ENCODE measurements at regions of chr1 and their contacts with region 1.

Region 1: DNA sequence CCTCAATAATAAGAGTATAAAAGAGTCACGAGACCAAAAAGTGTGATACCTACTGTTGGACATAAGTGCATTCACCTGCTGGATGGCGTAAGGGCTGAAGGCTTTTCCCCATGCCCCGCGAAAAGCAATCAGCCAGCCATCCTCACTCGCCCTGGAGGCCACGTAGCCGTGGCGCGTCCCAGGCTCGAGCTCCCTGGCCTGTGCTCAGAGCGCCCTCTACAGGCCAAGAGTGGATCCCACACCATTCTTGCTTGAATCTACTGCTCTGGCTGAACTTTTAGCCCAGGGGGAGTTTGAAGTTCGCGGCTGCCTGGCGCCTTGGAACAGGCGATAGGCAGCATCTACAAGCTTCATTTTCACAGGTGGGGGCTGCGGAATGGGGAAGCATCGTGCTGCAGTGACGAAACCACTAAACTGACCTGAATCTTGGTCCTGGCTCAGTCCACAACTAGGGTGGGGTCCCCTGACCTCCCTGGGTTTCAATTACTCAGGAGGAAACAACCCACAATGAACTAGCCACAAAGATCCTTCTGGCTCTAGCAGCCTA is 70.3 kb upstream of the SERBP1 start:
- DNase-seq: peak; percentile 57
- ATAC-seq: peak; percentile 99
- H3K4me3 ChIP-seq: no peak overlapping the region
- H3K27ac ChIP-seq: no peak overlapping the region
- H3K4me1 ChIP-seq: no peaks in the 10 kb centered on the region
- H3K27me3 ChIP-seq: no peaks in the 10 kb centered on the region; the same call in 1 of the 2 replicates
- CTCF ChIP-seq: peak; percentile 98

Region 2: GRCh38 chr1:66996018-66996682 is 504.3 kb before region 1 on chr1:
- CTCF ChIA-PET with region 1: no interaction called
- POLR2A ChIA-PET with region 1: no interaction called
- in situ Hi-C with region 1: no loop called
- intact Hi-C with region 1: loop called (anchors 10 kb)
- DNase-seq: peak; percentile 71
- ATAC-seq: peak; percentile 87
- H3K4me3 ChIP-seq: no peak overlapping the region
- H3K27ac ChIP-seq: no peak overlapping the region
- H3K4me1 ChIP-seq: no peaks in the 10 kb centered on the region
- H3K27me3 ChIP-seq: no peaks in the 10 kb centered on the region
- CTCF ChIP-seq: peak; percentile 88

Region 3: GRCh38 chr1:67214420-67215174 is 285.9 kb before region 1 on chr1:
- CTCF ChIA-PET with region 1: interaction called, 12 read pairs
- POLR2A ChIA-PET with region 1: no interaction called
- in situ Hi-C with region 1: no loop called
- intact Hi-C with region 1: loop called (anchors 5 kb)
- DNase-seq: no peak
- ATAC-seq: peak; percentile 68; the same call in 1 of the 2 replicates
- H3K4me3 ChIP-seq: no peak overlapping the region
- H3K27ac ChIP-seq: no peak overlapping the region
- H3K4me1 ChIP-seq: no peaks in the 10 kb centered on the region
- H3K27me3 ChIP-seq: peaks cover 6% of the 10 kb centered on the region; the same call in 1 of the 2 replicates
- CTCF ChIP-seq: peak; percentile 59

Region 4: DNA sequence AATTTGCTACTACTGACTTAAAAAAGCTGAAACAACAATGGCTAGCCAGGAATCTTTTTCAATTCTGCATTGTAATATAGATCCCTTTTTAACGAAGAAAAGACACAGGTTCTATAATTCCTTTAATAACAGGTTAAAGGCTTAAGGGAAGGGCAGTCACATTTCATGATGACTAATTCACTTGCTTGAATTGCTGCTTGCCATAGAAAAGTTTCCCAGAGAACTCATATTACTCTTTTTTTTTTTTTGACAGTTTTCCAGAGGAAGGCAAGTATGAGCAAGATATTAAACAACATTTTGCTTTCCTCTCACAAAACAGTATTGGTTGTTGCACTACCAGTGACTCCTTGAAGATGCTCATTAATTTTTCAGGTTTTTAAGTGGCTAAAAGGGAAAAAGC is 273.3 kb before region 1 on chr1:
- CTCF ChIA-PET with region 1: no interaction called
- POLR2A ChIA-PET with region 1: no interaction called
- in situ Hi-C with region 1: no loop called
- intact Hi-C with region 1: loop called (anchors 5 kb)
- DNase-seq: no peak
- ATAC-seq: no peak
- H3K4me3 ChIP-seq: no peak overlapping the region
- H3K27ac ChIP-seq: no peak overlapping the region
- H3K4me1 ChIP-seq: no peaks in the 10 kb centered on the region
- H3K27me3 ChIP-seq: peaks cover 4% of the 10 kb centered on the region; the same call in 1 of the 2 replicates
- CTCF ChIP-seq: no peak

Region 5: GRCh38 chr1:67347688-67348472 is 152.6 kb before region 1 on chr1:
- CTCF ChIA-PET with region 1: interaction called, 10 read pairs
- POLR2A ChIA-PET with region 1: no interaction called
- in situ Hi-C with region 1: no loop called
- intact Hi-C with region 1: loop called (anchors 2 kb)
- DNase-seq: peak; percentile 33
- ATAC-seq: peak; percentile 92
- H3K4me3 ChIP-seq: no peak overlapping the region
- H3K27ac ChIP-seq: no peak overlapping the region
- H3K4me1 ChIP-seq: no peaks in the 10 kb centered on the region
- H3K27me3 ChIP-seq: peaks cover 2% of the 10 kb centered on the region; the same call in 1 of the 2 replicates
- CTCF ChIP-seq: peak; percentile 83

Region 6: DNA sequence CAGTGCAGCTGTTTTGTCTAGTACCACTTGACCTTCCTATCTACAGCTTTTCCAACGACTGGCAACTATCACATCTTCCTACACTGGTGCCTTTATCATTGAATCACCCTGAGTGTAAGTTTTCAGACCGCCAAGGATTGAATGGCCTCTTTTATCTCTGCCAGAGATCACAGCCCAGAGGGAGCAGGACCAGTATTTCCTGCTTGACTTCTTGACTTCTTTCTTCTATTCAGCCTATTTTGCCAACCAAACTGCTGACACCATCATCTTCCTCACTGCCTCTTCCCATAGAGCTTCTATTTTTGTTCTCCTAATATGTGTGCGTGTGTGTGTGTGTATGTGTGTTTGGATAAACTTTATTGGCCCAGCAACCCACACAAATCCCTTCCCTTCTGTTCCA is 124.1 kb before region 1 on chr1:
- CTCF ChIA-PET with region 1: no interaction called
- POLR2A ChIA-PET with region 1: no interaction called
- in situ Hi-C with region 1: no loop called
- intact Hi-C with region 1: no loop called
- DNase-seq: no peak
- ATAC-seq: no peak
- H3K4me3 ChIP-seq: no peak overlapping the region
- H3K27ac ChIP-seq: no peak overlapping the region
- H3K4me1 ChIP-seq: no peaks in the 10 kb centered on the region
- H3K27me3 ChIP-seq: no peaks in the 10 kb centered on the region
- CTCF ChIP-seq: no peak

Region 7: GRCh38 chr1:67430352-67431155 is 69.9 kb before region 1 on chr1 and contains the start of gene SERBP1:
- CTCF ChIA-PET with region 1: interaction called, 3 read pairs
- POLR2A ChIA-PET with region 1: no interaction called
- in situ Hi-C with region 1: no loop called
- intact Hi-C with region 1: loop called (anchors 5 kb)
- DNase-seq: peak; percentile 94
- ATAC-seq: peak; percentile 96
- H3K4me3 ChIP-seq: peak within 1 kb of the TSS; percentile 73 to 87
- H3K27ac ChIP-seq: peak within 1 kb of the TSS; percentile 94
- H3K4me1 ChIP-seq: peaks cover 24% of the 10 kb centered on the region
- H3K27me3 ChIP-seq: no peaks in the 10 kb centered on the region
- CTCF ChIP-seq: no peak
- total RNA-seq, gene SERBP1: 230 TPM

Region 8: DNA sequence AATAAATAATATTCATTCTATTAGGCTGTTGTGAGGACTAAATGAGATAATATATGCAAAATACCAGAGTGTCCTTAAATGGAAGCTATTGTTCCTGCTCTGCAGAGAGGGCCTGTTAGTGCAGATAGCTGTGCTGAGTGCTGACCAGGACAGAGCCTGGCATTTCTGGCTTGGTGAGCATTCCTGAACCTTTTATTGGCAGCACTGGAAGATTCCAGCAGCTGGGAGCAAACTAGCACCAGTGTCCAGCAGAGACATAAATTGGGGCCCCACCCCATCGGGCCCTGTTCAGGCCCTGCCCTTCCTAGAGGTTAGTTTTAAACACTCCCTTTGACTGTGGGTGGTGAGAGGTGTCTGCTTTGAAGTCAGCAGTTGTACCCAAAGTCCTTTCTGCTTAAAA is 98.6 kb after region 1 on chr1:
- CTCF ChIA-PET with region 1: no interaction called
- POLR2A ChIA-PET with region 1: no interaction called
- in situ Hi-C with region 1: no loop called
- intact Hi-C with region 1: no loop called
- DNase-seq: no peak
- ATAC-seq: peak; percentile 48; the same call in 1 of the 2 replicates
- H3K4me3 ChIP-seq: no peak overlapping the region
- H3K27ac ChIP-seq: peak overlapping the region; percentile 66; the same call in 1 of the 2 replicates
- H3K4me1 ChIP-seq: no peaks in the 10 kb centered on the region
- H3K27me3 ChIP-seq: no peaks in the 10 kb centered on the region
- CTCF ChIP-seq: no peak